Uterus (tissue), 4 donors: ENCODE measurements at regions of chr1 and their contacts with region 1.

Region 1: GRCh38 chr1:94805912-94806311 is 14.2 kb upstream of the SLC44A3 start:
- DNase-seq: peak; percentile 50 to 59
- H3K4me3 ChIP-seq: no peak overlapping the region
- H3K27ac ChIP-seq: no peak overlapping the region
- H3K4me1 ChIP-seq: no peaks in the 10 kb centered on the region
- H3K27me3 ChIP-seq: no peaks in the 10 kb centered on the region
- CTCF ChIP-seq: peak; percentile 92 to 97 (median 96)
- POLR2A ChIP-seq: no peak

Region 2: GRCh38 chr1:94481473-94481933 is 324.4 kb before region 1 on chr1:
- intact Hi-C with region 1: loop called (anchors 5 kb)
- DNase-seq: peak; percentile 26 to 28
- H3K4me3 ChIP-seq: no peak overlapping the region
- H3K27ac ChIP-seq: no peak overlapping the region
- H3K4me1 ChIP-seq: no peaks in the 10 kb centered on the region
- H3K27me3 ChIP-seq: no peaks in the 10 kb centered on the region
- CTCF ChIP-seq: peak; percentile 60 to 80 (median 69)
- POLR2A ChIP-seq: no peak

Region 3: DNA sequence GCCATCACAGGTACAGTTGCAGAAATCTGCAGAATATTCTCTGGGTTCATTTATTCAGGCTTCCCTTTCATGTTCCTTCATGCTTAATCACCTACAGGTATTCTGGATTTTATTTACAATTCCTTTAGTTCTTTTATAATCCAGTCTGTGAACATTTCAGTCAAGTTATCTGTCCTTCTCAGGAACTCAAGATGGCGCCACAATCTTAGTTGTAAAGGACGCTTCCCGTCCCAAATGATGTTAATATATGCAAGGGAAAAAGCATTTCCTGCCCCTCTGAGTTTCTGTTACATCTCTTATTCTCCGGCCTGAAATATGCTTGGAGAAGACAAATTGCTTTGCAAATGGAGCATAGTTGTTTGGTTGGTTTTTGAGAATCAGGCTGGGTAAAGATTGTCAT is 283.6 kb before region 1 on chr1:
- intact Hi-C with region 1: loop called (anchors 5 kb)
- DNase-seq: peak in 1 of 2 donors; percentile 41
- H3K4me3 ChIP-seq: no peak overlapping the region
- H3K27ac ChIP-seq: no peak overlapping the region
- H3K4me1 ChIP-seq: no peaks in the 10 kb centered on the region
- H3K27me3 ChIP-seq: no peaks in the 10 kb centered on the region
- CTCF ChIP-seq: peak; percentile 52 to 65 (median 61)
- POLR2A ChIP-seq: no peak

Region 4: DNA sequence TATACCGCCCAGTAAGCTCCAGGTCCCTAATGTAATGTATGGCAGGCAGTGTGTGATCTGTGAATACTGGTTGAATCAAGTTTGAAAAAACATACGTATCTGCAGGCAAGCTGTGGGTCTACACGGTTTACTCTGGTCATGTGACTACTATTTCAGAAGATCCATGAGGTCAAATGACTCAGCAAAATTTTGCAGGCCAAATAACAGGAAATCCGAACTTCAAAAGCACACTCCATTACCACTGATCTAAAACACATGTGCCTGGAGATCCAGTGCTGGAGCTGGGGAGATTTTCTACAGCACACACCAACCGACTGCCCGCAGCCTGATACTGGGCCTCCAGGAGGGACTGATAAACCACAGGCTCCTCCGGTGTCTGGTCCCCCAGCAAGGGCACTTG is 50.2 kb before region 1 on chr1:
- intact Hi-C with region 1: no loop called
- DNase-seq: peak; percentile 38 to 53
- H3K4me3 ChIP-seq: no peak overlapping the region
- H3K27ac ChIP-seq: peak overlapping the region in 1 of 2 donors; percentile 1
- H3K4me1 ChIP-seq: peaks cover 0 to 4% of the 10 kb centered on the region in 2 donors
- H3K27me3 ChIP-seq: no peaks in the 10 kb centered on the region
- CTCF ChIP-seq: no peak
- POLR2A ChIP-seq: no peak